ENCODE measurements at regions of chr5 and their contacts with region 1.

Region 1: DNA sequence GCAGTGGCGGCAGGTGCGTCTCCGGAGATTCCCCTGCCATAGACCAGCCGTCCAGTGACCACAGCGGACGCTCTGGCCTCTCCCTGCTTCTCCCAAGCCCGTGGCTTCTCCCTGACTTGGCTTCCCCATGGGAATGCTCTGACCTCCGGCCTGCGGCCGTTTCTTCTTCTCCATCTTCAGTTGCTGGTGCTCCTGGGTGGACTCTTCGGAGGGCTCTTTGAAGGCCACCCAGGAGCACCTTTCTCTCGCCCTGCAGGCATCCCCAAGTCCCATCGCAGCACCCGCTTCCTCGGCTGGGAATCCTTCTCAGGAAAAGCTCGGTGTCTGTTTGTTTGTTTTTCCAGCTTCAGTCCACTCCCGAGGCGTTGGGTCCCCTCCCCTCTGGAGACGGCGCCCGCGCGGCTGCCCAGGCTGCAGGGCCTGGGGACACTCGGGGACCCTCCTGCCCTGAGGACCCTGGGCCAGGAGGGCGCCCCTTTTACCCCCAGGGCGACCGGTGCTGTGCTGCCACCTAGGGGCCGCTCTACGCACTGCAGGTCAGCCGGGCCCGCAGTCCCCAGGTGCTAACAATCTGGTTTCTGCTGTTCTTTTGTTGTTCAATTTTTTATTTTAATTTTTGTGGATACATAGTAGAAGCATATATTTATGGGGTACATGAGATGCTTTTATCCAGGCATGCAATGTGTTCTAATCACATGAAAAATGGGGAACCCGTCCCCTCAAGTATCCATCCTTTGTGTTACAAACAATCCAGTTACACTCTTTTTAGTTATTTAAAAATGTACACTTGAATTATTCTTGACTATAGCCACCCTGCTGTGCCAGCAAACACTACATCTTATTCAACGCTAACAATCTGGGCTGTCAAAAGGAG is 197.9 kb upstream of the ADAMTS16 start:
- DNase-seq: no peak
- ATAC-seq: peak; percentile 94
- H3K4me3 ChIP-seq: no peak overlapping the region
- H3K27ac ChIP-seq: no peak overlapping the region
- H3K4me1 ChIP-seq: no peaks in the 10 kb centered on the region
- H3K27me3 ChIP-seq: peaks cover 0 to 25% of the 10 kb centered on the region in 2 experiments; a peak in 2 of 5 replicates
- CTCF ChIP-seq: peak; percentile 76
- EP300 ChIP-seq: no peak
- POLR2A ChIP-seq: no peak
- RAD21 ChIP-seq: peak; percentile 33; the same call in 1 of the 2 replicates

Region 2: DNA sequence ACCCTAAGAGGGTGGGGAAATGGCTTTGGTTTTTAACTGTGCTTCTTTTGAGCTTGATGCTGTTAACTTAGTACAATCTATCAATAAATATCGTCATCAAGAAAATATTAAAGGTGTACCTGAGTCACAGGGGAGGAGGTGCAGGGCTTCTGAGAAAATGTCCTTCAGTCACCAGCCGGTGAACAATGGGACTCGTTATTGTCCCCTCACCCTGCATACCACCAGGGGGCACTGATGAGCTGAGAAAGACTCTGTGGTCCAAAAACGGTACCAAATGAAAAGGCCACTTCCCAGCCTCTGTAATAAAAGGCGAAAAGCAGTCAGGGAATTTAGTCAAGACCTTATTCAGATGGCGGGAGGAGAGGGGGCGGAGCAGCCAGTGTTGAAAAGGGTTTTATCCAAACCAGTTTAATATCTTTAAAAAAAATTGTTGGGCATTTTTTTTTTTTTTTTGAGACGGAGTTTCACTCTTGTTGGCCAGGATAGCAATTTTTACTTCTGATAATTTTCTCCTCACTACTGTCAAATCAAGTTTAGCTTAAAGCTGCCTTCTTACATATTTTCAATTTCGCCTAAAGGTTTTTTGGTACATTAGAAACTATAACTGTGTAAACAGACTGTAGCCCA is 74.0 kb before region 1 on chr5:
- CTCF ChIA-PET with region 1: no interaction called
- POLR2A ChIA-PET with region 1: no interaction called
- in situ Hi-C with region 1: no loop called
- intact Hi-C with region 1: loop called (anchors 1 kb)
- DNase-seq: peak; percentile 42
- ATAC-seq: peak; percentile 87
- H3K4me3 ChIP-seq: no peak overlapping the region
- H3K27ac ChIP-seq: no peak overlapping the region
- H3K4me1 ChIP-seq: no peaks in the 10 kb centered on the region
- H3K27me3 ChIP-seq: peaks cover 0 to 14% of the 10 kb centered on the region in 2 experiments; a peak in 3 of 5 replicates
- CTCF ChIP-seq: peak; percentile 76
- EP300 ChIP-seq: no peak
- POLR2A ChIP-seq: no peak
- RAD21 ChIP-seq: 0 out of 2 replicates have a peak, but pooled peaks have one; percentile 44

Region 3: GRCh38 chr5:4893063-4893744 is 49.0 kb before region 1 on chr5:
- CTCF ChIA-PET with region 1: no interaction called
- POLR2A ChIA-PET with region 1: no interaction called
- in situ Hi-C with region 1: no loop called
- intact Hi-C with region 1: no loop called
- DNase-seq: no peak
- ATAC-seq: no peak
- H3K4me3 ChIP-seq: no peak overlapping the region
- H3K27ac ChIP-seq: no peak overlapping the region
- H3K4me1 ChIP-seq: no peaks in the 10 kb centered on the region
- H3K27me3 ChIP-seq: peaks cover 0 to 3% of the 10 kb centered on the region in 2 experiments; a peak in 1 of 5 replicates
- CTCF ChIP-seq: no peak
- EP300 ChIP-seq: no peak
- POLR2A ChIP-seq: no peak
- RAD21 ChIP-seq: no peak

Region 4: DNA sequence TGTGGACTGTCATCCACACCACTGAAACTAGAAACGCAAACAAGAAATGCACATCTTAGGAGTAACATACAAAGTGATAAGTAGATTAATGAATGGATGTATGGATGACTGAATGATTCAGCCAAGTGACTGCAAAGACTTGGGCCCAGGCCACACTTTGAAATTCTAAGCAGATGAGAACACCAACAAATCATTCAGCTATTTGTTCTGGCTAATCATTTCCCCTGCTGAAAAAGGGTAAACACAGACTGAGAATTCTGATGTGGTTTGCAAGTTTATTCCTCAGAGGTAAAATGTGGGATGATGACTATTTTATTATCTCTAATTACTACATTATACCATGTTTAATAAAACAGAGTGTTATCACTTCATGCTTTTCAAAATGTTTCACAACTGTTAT is 34.7 kb after region 1 on chr5:
- CTCF ChIA-PET with region 1: no interaction called
- POLR2A ChIA-PET with region 1: no interaction called
- in situ Hi-C with region 1: no loop called
- intact Hi-C with region 1: no loop called
- DNase-seq: no peak
- ATAC-seq: no peak
- H3K4me3 ChIP-seq: no peak overlapping the region
- H3K27ac ChIP-seq: no peak overlapping the region
- H3K4me1 ChIP-seq: no peaks in the 10 kb centered on the region
- H3K27me3 ChIP-seq: no peaks in the 10 kb centered on the region
- CTCF ChIP-seq: no peak
- EP300 ChIP-seq: no peak
- POLR2A ChIP-seq: no peak
- RAD21 ChIP-seq: no peak